WTC11 (cell line): ENCODE measurements at regions of chr7 and their contacts with region 1.

Region 1: DNA sequence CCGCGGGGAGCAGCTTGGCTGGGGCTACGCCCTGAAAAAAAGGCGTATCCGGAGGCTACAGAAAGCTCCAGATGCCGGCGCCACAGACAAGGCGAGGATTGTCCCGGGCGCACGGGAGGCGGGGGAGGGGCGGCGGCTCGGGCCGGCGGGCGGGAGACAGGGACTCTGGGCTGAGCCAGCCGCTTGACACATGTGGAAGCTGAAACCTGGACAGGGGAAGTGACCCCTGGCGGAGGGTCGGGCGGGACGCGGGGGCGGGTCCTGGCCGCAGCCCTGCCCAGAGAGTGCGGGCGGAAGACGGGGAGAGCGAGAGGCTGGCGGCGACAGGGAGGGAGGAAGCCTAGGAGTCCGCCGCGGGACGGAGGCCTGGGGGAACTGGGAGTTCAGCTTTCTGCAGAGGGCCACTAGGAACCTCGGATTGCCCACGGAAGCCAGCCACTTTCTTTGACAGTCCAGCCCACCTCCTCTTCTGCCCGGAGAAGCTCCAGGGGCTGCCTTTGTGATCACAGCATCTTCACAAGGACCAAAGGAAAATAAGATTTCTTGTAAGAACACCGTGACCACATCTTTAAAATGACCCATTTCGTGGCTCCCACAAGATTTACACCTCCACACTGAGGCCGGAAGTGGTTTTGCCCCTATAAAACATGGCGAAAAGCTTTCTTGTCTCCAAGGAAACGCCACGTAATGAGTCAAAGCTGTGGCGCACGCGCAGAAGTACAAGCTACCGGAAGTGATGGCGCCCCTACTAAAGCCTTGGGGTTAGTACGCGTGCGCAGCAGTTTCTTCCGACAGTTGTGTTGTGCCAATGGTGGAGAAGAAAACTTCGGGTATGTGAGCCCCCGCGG is at the starts of genes PLOD3 and ZNHIT1:
- DNase-seq: peak; percentile 96
- ATAC-seq: peak; percentile 84
- H3K4me3 Mint-ChIP-seq: peak within 1 kb of the TSS; percentile 98
- H3K27ac Mint-ChIP-seq: peak within 1 kb of the TSS; percentile 90
- H3K4me1 Mint-ChIP-seq: peaks cover 27% of the 10 kb centered on the region
- H3K27me3 Mint-ChIP-seq: no peaks in the 10 kb centered on the region
- CTCF ChIP-seq: no peak
- total RNA-seq, gene PLOD3: 45.3 to 48.3 TPM (median 48.1 TPM) in 3 replicates
- total RNA-seq, gene ZNHIT1: 61.9 to 63.9 TPM (median 62.8 TPM) in 3 replicates

Region 2: GRCh38 chr7:101173752-101174244 is 43.8 kb before region 1 on chr7:
- CTCF ChIA-PET with region 1: interaction called, 20 read pairs
- POLR2A ChIA-PET with region 1: interaction called, 6 read pairs
- DNase-seq: peak; percentile 91
- ATAC-seq: peak; percentile 71
- H3K4me3 Mint-ChIP-seq: peak overlapping the region; percentile 74
- H3K27ac Mint-ChIP-seq: no peak overlapping the region
- H3K4me1 Mint-ChIP-seq: peaks cover 43% of the 10 kb centered on the region
- H3K27me3 Mint-ChIP-seq: peaks cover 100% of the 10 kb centered on the region
- CTCF ChIP-seq: no peak

Region 3: DNA sequence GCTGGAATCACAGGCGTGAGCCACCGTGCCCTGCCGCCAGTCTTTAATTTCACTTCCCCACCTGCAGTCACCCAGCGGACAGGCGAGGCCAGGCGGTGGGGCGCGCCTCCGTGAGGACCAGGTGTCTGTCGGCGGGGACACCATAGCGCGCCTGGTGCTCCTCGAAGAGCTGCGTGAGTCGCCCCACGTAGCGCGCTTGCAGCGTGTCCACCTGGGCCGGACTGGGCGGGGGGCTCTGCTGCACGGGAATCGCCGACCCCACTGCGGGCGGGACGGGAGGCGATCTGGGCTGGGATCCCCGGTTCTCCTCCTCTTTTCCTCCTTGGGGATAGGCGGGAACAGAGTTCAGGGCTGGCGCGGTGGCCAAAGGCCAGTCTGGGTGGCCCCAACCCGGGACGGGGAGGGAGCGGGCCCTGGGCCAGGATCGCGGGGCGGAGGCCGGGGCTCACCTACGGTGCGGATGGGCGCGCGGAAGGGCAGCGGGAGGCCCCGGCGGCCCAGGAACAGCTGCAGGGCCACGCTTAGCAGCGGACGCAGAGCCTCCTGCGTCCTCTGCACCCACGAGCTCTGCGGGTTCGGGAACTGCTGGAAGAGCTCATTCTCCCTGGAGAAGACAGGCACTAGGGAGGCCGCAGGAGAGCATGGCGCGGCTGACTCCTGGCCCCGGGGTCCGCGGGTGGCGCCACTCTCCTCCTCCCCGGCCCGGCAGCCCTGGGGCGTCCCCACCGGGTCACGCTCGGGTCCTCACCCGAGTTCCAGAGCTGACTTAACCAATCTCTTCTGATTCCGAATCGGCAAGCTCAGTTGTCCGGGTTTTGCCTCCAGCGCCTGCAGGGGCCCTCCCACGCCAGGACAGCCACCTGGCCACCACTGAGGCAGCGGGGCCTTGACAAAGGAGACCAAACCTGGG is 15.7 kb before region 1 on chr7:
- CTCF ChIA-PET with region 1: interaction called, 33 read pairs
- POLR2A ChIA-PET with region 1: interaction called, 7 read pairs
- DNase-seq: peak; percentile 56
- ATAC-seq: peak; percentile 62
- H3K4me3 Mint-ChIP-seq: peak overlapping the region; percentile 72
- H3K27ac Mint-ChIP-seq: no peak overlapping the region
- H3K4me1 Mint-ChIP-seq: peaks cover 28% of the 10 kb centered on the region
- H3K27me3 Mint-ChIP-seq: peaks cover 16% of the 10 kb centered on the region
- CTCF ChIP-seq: no peak

Region 4: DNA sequence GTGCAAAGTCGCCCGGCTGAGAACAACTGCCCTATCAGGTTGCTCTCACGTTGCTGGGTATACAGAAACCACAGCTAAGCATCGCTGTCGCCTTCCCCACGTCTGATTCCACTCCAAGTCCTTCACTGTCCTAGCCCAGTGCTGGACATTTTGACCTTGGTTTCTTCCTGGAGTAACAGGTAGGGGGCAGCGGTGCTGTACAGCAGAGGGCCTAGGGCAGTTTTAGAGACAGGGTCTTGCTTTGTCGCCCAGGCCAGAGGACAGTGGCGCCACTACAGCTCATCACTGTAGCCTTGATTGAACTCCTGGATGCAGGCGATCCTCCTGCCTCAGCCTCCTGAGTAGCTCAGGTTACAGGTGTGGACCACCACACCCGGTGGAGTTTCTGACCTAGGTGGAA is 17.4 kb after region 1 on chr7:
- CTCF ChIA-PET with region 1: interaction called, 13 read pairs
- POLR2A ChIA-PET with region 1: interaction called, 6 read pairs
- DNase-seq: peak; percentile 55
- ATAC-seq: peak; percentile 10; the same call in 1 of the 2 replicates
- H3K4me3 Mint-ChIP-seq: no peak overlapping the region
- H3K27ac Mint-ChIP-seq: peak overlapping the region; percentile 83; the same call in 1 of the 2 replicates
- H3K4me1 Mint-ChIP-seq: peaks cover 39% of the 10 kb centered on the region
- H3K27me3 Mint-ChIP-seq: no peaks in the 10 kb centered on the region
- CTCF ChIP-seq: no peak; the same call in 1 of the 2 replicates

Region 5: DNA sequence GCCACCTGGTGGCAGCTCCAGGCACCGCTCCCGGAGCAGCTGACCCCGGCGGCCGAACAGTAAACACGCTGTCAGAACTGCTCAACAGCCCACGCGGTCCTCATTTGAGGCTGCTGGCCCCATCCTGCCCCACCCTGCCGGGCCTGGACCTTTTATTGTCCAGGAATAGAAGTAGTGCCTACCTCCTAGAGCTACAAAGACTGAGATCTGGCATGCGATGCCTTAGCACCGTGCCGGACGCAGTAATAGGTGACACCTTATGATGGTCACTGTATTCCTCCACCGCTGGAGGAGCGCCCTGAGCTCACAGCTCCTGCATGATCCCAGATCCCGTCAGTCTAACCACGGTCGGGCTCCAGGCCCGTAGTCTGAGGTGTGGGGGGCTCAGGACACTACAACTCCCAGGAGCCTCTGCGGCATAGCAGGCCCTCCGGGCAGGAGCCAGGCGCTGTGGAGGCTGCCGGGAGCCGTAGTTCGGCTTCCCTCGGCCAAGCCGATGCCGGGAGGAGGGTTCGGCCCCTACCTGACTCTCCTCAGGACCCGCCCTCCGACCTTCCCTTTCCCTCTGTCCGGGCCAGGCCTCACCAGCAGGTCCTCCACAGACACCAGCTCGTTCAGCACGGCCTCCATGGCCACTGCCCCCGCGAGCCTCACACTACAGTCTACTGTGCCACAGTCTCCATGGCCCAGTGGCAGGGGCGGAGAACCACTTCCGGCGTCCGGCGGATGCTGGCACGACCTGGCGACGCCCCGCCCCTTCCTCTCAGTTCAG is 26.9 kb after region 1 on chr7 and contains the start of gene FIS1:
- CTCF ChIA-PET with region 1: interaction called, 62 read pairs
- POLR2A ChIA-PET with region 1: interaction called, 4 read pairs
- DNase-seq: peak; percentile 95
- ATAC-seq: peak; percentile 93
- H3K4me3 Mint-ChIP-seq: peak within 1 kb of the TSS; percentile 96
- H3K27ac Mint-ChIP-seq: peak within 1 kb of the TSS; percentile 98
- H3K4me1 Mint-ChIP-seq: peaks cover 21% of the 10 kb centered on the region
- H3K27me3 Mint-ChIP-seq: no peaks in the 10 kb centered on the region
- CTCF ChIP-seq: peak; percentile 47
- total RNA-seq, gene FIS1: 121 to 123 TPM (median 122 TPM) in 3 replicates

Region 6: GRCh38 chr7:101294039-101294831 is 76.6 kb after region 1 on chr7:
- CTCF ChIA-PET with region 1: interaction called, 19 read pairs
- POLR2A ChIA-PET with region 1: no interaction called
- DNase-seq: peak; percentile 85
- ATAC-seq: peak; percentile 64
- H3K4me3 Mint-ChIP-seq: peak overlapping the region; percentile 36
- H3K27ac Mint-ChIP-seq: peak overlapping the region; percentile 99
- H3K4me1 Mint-ChIP-seq: peaks cover 65% of the 10 kb centered on the region
- H3K27me3 Mint-ChIP-seq: no peaks in the 10 kb centered on the region
- CTCF ChIP-seq: no peak